ENCODE measurements at regions of chr7 and their contacts with region 1.

Region 1: GRCh38 chr7:87345166-87345927 is at the start of gene CROT:
- DNase-seq: peak; percentile 92
- H3K4me3 Mint-ChIP-seq: peak within 1 kb of the TSS; percentile 87
- H3K27ac Mint-ChIP-seq: peak within 1 kb of the TSS; percentile 79
- H3K4me1 Mint-ChIP-seq: peaks cover 38% of the 10 kb centered on the region
- H3K27me3 Mint-ChIP-seq: no peaks in the 10 kb centered on the region
- total RNA-seq, gene CROT: 7.5 and 7.9 TPM in 2 replicates

Region 2: DNA sequence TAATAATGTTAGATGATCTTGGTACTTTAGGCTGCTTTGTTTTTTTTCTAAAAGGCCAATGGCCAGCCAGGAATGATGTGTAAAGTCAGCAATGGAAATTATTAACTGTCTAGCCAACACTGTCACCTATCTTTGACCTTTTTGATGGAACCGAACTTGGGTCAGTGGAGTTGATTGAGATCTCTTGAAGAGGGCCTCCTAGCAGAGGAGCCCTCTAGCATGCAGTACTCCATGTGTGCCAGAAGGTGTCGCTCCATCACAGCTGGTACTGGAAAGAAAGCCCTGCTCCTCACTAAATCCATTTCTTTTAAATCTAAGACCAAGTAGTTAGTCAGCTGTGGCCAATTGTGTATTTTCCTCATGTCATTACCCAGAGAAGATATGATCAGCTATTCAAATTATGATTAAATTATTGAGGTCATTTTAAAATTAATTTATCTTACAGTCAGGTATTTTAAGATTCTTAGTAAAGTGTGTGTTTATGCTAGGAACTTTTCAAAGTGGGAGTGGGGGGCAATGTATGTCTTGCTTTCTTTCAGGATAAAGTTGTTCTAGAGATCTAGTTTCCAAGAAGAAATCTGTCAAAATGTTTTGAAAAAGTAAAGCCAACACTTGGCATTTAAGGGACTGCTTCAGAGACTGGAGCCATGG is 33.0 kb before region 1 on chr7:
- intact Hi-C with region 1: loop called (anchors 2 kb)
- DNase-seq: peak; percentile 33
- H3K4me3 Mint-ChIP-seq: no peak overlapping the region
- H3K27ac Mint-ChIP-seq: no peak overlapping the region
- H3K4me1 Mint-ChIP-seq: peaks cover 3% of the 10 kb centered on the region
- H3K27me3 Mint-ChIP-seq: peaks cover 8% of the 10 kb centered on the region

Region 3: GRCh38 chr7:87369216-87369615 is 23.9 kb after region 1 on chr7:
- intact Hi-C with region 1: loop called (anchors 2 kb)
- DNase-seq: peak; percentile 22
- H3K4me3 Mint-ChIP-seq: no peak overlapping the region
- H3K27ac Mint-ChIP-seq: no peak overlapping the region
- H3K4me1 Mint-ChIP-seq: peaks cover 9% of the 10 kb centered on the region
- H3K27me3 Mint-ChIP-seq: no peaks in the 10 kb centered on the region

Region 4: DNA sequence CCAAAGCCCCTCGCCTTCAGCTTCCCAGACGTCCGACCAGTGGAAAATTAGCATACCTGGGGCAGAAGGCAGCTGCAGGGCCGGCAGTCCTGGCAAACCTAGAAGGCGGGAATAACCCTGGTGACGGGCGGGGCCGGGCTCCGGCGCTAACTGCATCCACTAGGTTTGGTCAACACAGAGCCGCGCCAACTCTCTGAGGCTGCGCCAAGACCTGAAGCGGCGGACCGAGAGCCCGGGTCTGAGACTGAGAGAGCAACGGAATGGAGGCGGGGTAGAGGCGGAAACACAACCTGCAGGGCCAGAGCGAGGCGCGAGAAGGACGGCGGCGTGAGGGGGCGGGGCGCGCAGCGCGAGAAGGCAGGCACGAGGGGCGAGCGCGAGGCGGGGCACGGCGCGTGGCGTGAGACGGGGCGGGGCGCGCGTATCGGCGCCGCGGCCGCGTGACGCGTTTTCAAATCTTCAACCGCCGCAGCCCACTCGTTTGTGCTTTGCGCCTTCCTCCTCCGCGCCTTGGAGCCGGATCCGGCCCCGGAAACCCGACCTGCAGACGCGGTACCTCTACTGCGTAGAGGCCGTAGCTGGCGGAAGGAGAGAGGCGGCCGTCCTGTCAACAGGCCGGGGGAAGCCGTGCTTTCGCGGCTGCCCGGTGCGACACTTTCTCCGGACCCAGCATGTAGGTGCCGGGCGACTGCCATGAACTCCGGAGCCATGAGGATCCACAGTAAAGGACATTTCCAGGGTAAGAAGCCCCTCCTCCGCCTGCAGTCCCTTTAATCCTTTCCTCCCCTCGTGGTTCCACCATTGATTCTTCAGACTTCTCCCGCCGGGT is 530.9 kb after region 1 on chr7 and contains the starts of genes DBF4 and SLC25A40:
- intact Hi-C with region 1: loop called (anchors 10 kb)
- DNase-seq: peak; percentile 96
- H3K4me3 Mint-ChIP-seq: peak within 1 kb of the TSS; percentile 96
- H3K27ac Mint-ChIP-seq: peak within 1 kb of the TSS; percentile 97
- H3K4me1 Mint-ChIP-seq: peaks cover 49% of the 10 kb centered on the region
- H3K27me3 Mint-ChIP-seq: no peaks in the 10 kb centered on the region
- total RNA-seq, gene DBF4: 72.3 and 75.3 TPM in 2 replicates
- total RNA-seq, gene SLC25A40: 48.7 and 49.3 TPM in 2 replicates

Region 5: DNA sequence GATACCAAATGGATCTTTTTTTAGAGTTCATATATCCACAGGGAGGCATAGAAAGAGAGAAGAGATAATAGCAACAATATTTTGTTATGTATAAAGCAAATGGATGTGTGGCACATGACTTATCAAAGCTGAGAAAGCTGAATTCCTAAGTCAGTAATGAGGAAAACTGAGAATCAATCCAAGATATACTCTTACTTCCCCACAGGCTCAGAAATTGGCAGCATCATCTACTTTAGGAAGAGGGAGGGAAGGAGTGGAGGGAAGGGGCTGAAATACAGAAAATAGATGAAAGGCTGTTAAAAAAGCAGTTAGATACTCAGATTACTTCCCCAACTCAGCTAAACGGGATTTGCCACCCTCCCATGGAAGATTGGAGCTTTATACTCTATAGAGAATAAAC is 811.0 kb after region 1 on chr7:
- intact Hi-C with region 1: no loop called
- DNase-seq: no peak
- H3K4me3 Mint-ChIP-seq: no peak overlapping the region
- H3K27ac Mint-ChIP-seq: no peak overlapping the region
- H3K4me1 Mint-ChIP-seq: no peaks in the 10 kb centered on the region
- H3K27me3 Mint-ChIP-seq: no peaks in the 10 kb centered on the region

Measured in activated T-helper 2 cell treated with anti-CD3 and anti-CD28 coated beads, Interferon-gamma antibody, Interleukin-2, Interleukin-4, amounts not matched to agents 10 μg/mL and 5 μg/mL and 100 μg/mL, durations not matched to agents 14 hours and 24 hours and 36 hours (primary cell).